Tibial artery (tissue), 4 donors: ENCODE measurements at regions of chr9 and their contacts with region 1.

Region 1: DNA sequence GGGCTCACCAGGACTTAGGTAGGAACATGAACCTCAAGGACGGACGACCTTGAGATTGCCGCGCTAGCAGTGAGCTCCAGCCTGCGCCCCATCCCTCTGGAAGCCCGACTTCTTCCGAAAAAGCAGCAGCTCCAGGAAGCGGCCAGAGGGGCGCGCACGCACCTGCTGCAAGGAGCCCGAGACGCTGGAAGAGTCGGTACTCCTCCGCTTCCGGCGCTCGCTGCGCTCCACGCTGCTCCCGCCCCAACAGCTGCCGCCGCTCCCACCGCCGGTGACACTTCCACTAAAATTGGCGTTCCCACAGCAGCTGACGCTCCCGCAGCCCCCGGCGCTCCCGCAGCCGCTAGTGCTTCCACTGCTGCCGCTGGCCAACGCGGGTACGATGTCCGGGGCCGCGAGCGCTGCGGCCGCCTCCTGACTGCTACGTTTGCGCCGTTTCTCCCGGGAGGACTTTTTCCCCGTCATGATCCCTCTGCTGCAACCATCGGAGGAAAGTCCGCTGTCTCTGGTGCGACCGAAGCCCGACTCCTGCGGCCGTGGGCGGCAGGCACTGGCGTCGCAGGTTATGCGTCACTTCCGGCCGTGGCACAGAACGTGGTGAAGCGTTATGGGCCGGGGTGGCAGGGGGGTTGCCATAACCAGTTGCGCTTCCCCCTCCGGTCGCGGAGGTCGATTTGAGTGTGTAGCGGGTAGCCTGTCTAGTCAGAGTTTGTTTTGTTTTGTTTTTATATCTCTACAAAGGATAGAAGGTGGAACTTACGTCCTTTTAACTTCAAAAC is at the start of gene CAAP1:
- DNase-seq: peak; percentile 90 to 94
- H3K4me3 ChIP-seq: peak within 1 kb of the TSS; percentile 97 to 100
- H3K27ac ChIP-seq: peak within 1 kb of the TSS; percentile 97 to 98
- H3K4me1 ChIP-seq: peaks cover 0 to 24% (median 15%) of the 10 kb centered on the region in 4 donors
- H3K27me3 ChIP-seq: no peaks in the 10 kb centered on the region
- CTCF ChIP-seq: peak; percentile 19 to 31

Region 2: GRCh38 chr9:26955921-26956859 is 63.8 kb after region 1 on chr9 and contains the start of gene IFT74:
- intact Hi-C with region 1: loop called (anchors 5 kb)
- DNase-seq: peak; percentile 99
- H3K4me3 ChIP-seq: peak within 1 kb of the TSS; percentile 61 to 75
- H3K27ac ChIP-seq: peak within 1 kb of the TSS; percentile 80 to 92
- H3K4me1 ChIP-seq: peaks cover 0 to 10% (median 5%) of the 10 kb centered on the region in 4 donors
- H3K27me3 ChIP-seq: no peaks in the 10 kb centered on the region
- CTCF ChIP-seq: no peak

Region 3: GRCh38 chr9:27499481-27499880 is 607.0 kb after region 1 on chr9:
- intact Hi-C with region 1: no loop called
- DNase-seq: no peak
- H3K4me3 ChIP-seq: no peak overlapping the region
- H3K27ac ChIP-seq: no peak overlapping the region
- H3K4me1 ChIP-seq: peaks cover 0 to 3% (median 2%) of the 10 kb centered on the region in 4 donors
- H3K27me3 ChIP-seq: no peaks in the 10 kb centered on the region
- CTCF ChIP-seq: no peak